Endothelial cell of umbilical vein (primary cell): ENCODE measurements at regions of chr18 and their contacts with region 1.

Region 1: DNA sequence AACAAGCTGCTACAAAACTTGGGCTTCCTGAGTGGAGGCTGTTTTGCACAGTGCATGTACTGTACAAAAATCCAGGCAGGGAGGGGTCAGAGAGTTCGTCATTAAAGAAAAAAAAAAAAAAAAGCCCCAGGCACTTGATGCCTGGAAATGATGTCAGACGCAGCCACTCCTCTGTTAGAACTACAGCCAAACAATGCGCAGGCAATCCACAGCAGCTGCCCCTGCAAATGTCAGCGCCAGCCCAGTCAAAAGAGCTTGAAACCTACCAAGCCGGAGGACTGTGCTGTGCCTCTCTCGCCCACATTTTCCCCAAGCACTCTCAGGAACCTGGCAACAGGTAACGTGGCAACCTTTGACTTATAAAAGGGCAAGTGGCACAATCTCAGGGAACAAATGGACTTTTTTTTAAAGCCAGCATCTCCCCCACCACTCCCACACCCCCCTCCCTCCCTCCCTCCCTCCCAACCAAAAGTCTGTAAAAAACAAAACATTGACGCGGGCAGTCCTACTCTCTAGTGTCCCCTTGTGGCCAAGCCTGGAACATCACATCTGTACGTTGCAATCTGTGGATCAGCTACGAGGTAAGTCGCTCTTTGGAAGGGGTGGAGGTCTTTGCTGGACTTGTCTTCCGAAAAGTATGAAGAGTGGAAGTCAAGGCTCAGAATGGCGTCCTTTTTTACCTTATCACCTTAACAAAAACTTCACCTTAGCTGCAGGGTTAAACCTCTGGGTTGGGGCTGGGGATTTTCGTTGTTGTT is 144.1 kb downstream of the TGIF1 start:
- DNase-seq: peak; percentile 98
- H3K4me3 ChIP-seq: peak overlapping the region; percentile 8 to 93 (median 48)
- H3K27ac ChIP-seq: peak overlapping the region; percentile 100
- H3K4me1 ChIP-seq: peaks cover 48% of the 10 kb centered on the region
- H3K27me3 ChIP-seq: no peaks in the 10 kb centered on the region
- CTCF ChIP-seq: peak; percentile 62 to 80
- POLR2A ChIP-seq: peak; percentile 81

Region 2: GRCh38 chr18:3261371-3262246 is 332.5 kb before region 1 on chr18 and contains the start of gene MYL12B:
- CTCF ChIA-PET with region 1: interaction called, 8 read pairs
- POLR2A ChIA-PET with region 1: interaction called, 3 read pairs
- dilution Hi-C with region 1: no loop called
- intact Hi-C with region 1: loop called (anchors 5 kb)
- DNase-seq: peak; percentile 80
- H3K4me3 ChIP-seq: peak within 1 kb of the TSS; percentile 93 to 100 (median 97)
- H3K27ac ChIP-seq: peak within 1 kb of the TSS; percentile 94
- H3K4me1 ChIP-seq: peaks cover 36% of the 10 kb centered on the region
- H3K27me3 ChIP-seq: no peaks in the 10 kb centered on the region
- CTCF ChIP-seq: no peak
- POLR2A ChIP-seq: peak; percentile 75
- total RNA-seq, gene MYL12B: 634 and 638 TPM in 2 replicates

Region 3: GRCh38 chr18:3321133-3321812 is 272.8 kb before region 1 on chr18:
- CTCF ChIA-PET with region 1: interaction called, 3 read pairs
- POLR2A ChIA-PET with region 1: no interaction called
- dilution Hi-C with region 1: no loop called
- intact Hi-C with region 1: loop called (anchors 5 kb)
- DNase-seq: peak; percentile 94
- H3K4me3 ChIP-seq: no peak overlapping the region
- H3K27ac ChIP-seq: peak overlapping the region; percentile 49
- H3K4me1 ChIP-seq: peaks cover 33% of the 10 kb centered on the region
- H3K27me3 ChIP-seq: no peaks in the 10 kb centered on the region
- CTCF ChIP-seq: no peak
- POLR2A ChIP-seq: no peak

Region 4: DNA sequence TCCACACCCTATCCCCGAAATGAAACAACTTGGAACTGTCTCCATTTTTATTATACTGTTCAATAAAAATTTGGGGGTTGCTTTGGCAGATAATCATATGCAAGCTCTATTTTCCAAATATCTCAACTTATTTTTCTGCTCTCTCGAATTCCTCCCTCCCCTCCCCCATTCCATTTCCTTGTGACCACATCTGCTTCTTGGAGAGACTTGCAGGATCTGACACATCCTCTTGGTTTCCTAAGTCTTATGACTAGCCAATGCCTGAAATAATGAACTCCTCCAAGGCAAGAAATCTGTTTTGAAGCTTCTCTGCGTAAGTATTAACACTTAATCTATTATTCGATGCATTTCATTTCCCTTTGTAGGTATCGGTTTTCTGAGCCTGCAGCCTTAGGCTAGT is 128.0 kb before region 1 on chr18:
- CTCF ChIA-PET with region 1: interaction called, 12 read pairs
- POLR2A ChIA-PET with region 1: no interaction called
- dilution Hi-C with region 1: no loop called
- intact Hi-C with region 1: no loop called
- DNase-seq: peak; percentile 92
- H3K4me3 ChIP-seq: peak overlapping the region in 1 of 3 experiments; percentile 47
- H3K27ac ChIP-seq: peak overlapping the region; percentile 92
- H3K4me1 ChIP-seq: peaks cover 36% of the 10 kb centered on the region
- H3K27me3 ChIP-seq: no peaks in the 10 kb centered on the region
- CTCF ChIP-seq: no peak
- POLR2A ChIP-seq: no peak

Region 5: GRCh38 chr18:3623769-3624545 is 29.9 kb after region 1 on chr18:
- CTCF ChIA-PET with region 1: interaction called, 14 read pairs
- POLR2A ChIA-PET with region 1: interaction called, 3 read pairs
- dilution Hi-C with region 1: no loop called
- intact Hi-C with region 1: loop called (anchors 1 kb)
- DNase-seq: peak; percentile 84
- H3K4me3 ChIP-seq: peak overlapping the region in 1 of 3 experiments; percentile 21
- H3K27ac ChIP-seq: peak overlapping the region; percentile 89
- H3K4me1 ChIP-seq: peaks cover 31% of the 10 kb centered on the region
- H3K27me3 ChIP-seq: no peaks in the 10 kb centered on the region
- CTCF ChIP-seq: no peak
- POLR2A ChIP-seq: peak; percentile 50

Region 6: GRCh38 chr18:3710712-3711269 is 116.7 kb after region 1 on chr18:
- CTCF ChIA-PET with region 1: interaction called, 4 read pairs
- POLR2A ChIA-PET with region 1: no interaction called
- dilution Hi-C with region 1: no loop called
- intact Hi-C with region 1: loop called (anchors 2 kb)
- DNase-seq: peak; percentile 96
- H3K4me3 ChIP-seq: no peak overlapping the region
- H3K27ac ChIP-seq: peak overlapping the region; percentile 90
- H3K4me1 ChIP-seq: peaks cover 27% of the 10 kb centered on the region
- H3K27me3 ChIP-seq: no peaks in the 10 kb centered on the region
- CTCF ChIP-seq: no peak
- POLR2A ChIP-seq: peak; percentile 93

Region 7: DNA sequence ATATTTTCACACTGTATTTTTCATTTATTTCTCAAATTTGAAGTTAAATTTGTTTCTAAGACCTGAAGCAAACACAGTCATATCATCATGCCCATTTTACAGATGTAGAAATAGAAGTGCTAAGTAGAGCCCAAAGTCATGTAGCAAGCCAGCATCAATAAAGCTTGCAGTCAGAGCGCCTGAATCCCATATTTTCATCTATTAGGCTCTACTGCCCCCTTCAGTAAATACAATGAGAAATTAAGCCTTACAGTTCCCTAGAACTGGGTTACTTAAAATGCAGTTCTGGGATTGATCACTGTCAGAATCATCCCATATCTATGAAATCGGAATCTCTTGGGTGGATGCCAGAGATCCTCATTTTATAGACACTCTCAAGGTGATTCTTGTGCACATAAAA is 275.8 kb after region 1 on chr18:
- CTCF ChIA-PET with region 1: interaction called, 6 read pairs
- POLR2A ChIA-PET with region 1: no interaction called
- dilution Hi-C with region 1: no loop called
- intact Hi-C with region 1: loop called (anchors 2 kb)
- DNase-seq: peak; percentile 68
- H3K4me3 ChIP-seq: no peak overlapping the region
- H3K27ac ChIP-seq: no peak overlapping the region
- H3K4me1 ChIP-seq: no peaks in the 10 kb centered on the region
- H3K27me3 ChIP-seq: peaks cover 0 to 14% of the 10 kb centered on the region in 2 experiments
- CTCF ChIP-seq: peak; percentile 28 to 39
- POLR2A ChIP-seq: no peak